ENCODE measurements at regions of chr3 and their contacts with region 1.

Region 1: DNA sequence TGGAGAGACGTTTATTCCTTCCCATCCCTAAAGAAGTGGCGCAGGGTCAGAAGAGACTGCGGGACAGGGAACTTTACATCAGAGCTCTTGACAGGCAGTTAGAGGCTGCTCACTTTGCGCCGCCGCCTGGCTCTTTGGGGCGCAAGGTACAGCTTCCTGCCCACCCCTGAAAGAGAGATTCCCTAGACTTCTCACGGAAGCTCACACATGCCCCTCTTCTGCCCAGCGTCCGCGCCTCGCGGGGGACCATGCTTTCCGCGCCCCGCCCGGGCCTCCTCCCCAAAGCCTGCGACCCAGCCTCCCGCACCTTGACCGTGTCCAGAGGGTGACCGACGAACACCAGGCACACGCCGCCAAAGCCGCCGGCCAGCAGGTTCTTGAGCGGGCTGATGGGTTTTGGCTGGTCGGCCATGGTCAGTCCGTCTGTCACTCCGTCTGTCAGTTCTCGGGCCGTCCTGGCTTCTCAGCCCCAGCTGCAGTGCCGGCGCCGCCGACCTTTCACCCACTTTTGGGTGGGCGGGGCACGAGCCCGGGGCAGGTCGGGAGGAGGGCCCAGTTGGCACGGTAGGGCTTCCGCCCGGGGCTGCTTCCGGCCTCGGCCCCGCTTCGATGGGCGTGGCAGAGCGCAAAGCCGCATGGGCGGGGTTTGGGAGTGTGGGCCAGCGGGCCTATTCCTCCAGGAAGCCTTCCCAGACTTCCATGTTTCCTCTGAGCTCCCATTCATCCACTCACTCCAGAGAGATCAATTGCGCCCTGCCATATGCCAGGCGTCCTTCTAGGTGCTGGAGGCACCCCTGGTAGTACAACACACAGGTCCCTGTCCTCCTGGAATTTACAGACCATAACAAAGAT is at the start of gene SLC25A20:
- DNase-seq: peak; percentile 95
- H3K4me3 Mint-ChIP-seq: peak within 1 kb of the TSS; percentile 87
- H3K27ac Mint-ChIP-seq: peak within 1 kb of the TSS; percentile 97
- H3K4me1 Mint-ChIP-seq: peaks cover 53% of the 10 kb centered on the region
- H3K27me3 Mint-ChIP-seq: no peaks in the 10 kb centered on the region

Region 2: DNA sequence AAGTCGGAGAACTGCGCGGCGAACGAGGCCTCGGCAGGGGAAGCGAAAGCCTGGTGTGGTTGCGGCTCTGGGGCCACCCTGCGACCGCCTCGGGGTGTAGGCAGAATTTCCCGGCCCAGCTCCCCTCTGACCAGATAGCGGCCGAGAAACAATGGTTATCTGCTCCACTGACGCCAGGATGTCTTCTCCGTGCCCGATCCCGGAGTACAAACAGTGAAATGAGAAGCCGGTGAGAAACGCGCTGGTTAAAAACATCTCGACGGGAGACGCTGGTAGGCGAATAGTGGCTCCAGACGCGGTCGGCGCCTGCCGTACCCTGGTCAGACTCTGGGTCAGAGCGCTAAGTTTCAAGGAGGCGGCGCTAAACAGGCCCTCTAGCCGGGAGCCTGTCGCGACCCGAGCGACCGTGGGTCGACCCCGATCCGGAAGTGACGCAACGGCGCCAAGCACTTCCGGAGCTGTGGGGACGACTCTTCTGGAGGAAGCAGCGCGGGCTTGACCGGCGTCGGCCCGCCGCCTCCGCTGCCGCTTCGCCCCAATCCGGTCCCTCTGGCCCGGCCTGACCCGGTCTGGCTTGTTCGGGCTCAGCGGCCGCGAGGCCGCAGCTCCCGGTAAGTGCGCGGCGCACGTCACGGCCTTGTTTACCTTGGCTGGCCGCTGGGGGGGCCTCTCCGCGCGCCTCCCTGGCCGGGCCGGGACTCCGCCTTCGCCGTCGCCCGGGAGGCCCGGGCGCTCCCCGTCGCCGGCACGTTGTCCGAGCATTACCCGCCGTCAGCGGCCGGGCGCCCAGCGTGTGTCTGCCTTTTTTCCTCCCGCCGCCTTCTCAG is 20.0 kb after region 1 on chr3 and contains the start of gene ARIH2:
- CTCF ChIA-PET with region 1: interaction called, 16 read pairs
- DNase-seq: peak; percentile 91
- H3K4me3 Mint-ChIP-seq: peak within 1 kb of the TSS; percentile 95
- H3K27ac Mint-ChIP-seq: peak within 1 kb of the TSS; percentile 100
- H3K4me1 Mint-ChIP-seq: peaks cover 34% of the 10 kb centered on the region
- H3K27me3 Mint-ChIP-seq: peaks cover 3% of the 10 kb centered on the region